Lower leg skin (tissue), 4 donors: ENCODE measurements at regions of chr12 and their contacts with region 1.

Region 1: GRCh38 chr12:78457938-78458337 is 406.6 kb upstream of the SYT1 start:
- DNase-seq: no peak
- H3K4me3 ChIP-seq: no peak overlapping the region
- CTCF ChIP-seq: no peak
- POLR2A ChIP-seq: no peak

Region 2: DNA sequence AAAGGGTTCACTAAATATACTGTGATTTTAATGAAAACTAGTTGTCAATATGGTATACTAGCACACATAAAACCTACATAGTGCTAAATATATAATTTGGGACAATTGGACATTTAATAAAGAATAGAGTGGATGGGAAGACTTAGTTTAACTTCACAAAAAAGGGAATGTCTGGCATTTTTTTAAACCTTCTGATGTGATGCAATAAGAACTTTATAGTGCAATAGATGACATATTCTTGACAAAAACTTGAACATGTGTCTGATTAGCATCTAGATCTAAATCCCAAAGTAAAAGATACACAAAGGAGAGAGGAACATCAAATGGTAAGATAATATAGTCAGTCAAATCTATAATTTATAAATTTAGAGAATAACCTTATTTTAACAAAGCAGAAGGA is 81.7 kb before region 1 on chr12:
- intact Hi-C with region 1: loop called (anchors 2 kb)
- DNase-seq: no peak
- H3K4me3 ChIP-seq: no peak overlapping the region
- CTCF ChIP-seq: no peak
- POLR2A ChIP-seq: no peak

Region 3: DNA sequence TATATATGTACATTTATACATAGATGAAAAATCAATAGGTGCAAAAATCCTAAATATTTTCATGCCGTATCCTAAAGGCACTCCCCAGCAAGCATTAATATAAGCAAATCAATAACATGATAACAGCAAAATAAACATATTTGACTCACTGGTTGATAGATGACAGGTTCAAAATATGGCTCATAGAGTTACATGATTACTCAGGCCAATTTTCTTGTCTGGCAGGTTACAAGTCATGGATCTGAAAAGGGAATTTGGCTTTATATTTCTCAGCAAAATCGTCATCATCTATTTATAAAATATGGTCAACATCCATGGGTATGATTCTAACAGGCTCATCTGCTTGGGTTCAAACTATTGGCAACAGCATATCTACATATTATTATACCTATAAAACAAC is 371.8 kb after region 1 on chr12:
- intact Hi-C with region 1: loop called (anchors 5 kb)
- DNase-seq: no peak
- H3K4me3 ChIP-seq: no peak overlapping the region
- CTCF ChIP-seq: no peak
- POLR2A ChIP-seq: no peak

Region 4: DNA sequence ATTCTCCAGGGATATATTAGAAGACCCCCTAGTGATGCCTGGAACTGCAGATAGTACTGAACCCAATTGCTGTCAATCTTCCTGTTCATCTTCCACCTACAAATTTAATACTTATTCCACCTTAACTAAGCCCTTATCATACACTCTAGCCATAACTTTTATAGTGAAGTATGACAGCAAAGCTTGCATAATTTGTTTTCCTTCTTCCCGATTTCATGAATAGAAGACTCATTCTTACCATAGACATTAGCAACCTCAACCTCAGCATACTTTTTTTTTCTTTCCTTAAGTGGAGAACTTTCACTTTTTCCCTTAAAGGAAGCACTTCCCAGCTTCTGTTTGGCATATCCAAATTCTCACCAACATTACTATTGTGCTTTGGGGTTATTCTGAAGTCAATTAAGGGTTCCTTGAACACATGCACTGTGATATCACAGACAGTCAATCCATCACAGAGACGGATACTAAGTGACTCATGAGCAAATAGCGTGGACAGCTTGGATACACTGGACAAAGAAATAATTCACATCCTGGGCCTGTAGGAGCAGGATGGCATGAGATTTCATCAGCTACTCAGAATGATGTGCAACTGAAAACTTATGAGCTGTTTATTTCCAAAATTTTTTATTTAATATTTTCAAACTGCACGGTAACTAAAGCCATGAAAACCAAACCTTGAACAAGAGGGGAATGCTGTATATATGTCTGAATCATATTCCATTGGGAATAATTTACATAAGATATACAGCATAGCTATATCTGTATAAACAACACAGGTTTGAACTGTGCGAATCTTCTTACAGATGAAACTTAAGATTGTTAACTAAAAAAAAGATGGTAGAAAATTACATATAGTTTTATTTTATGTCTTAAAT is 470.5 kb after region 1 on chr12:
- intact Hi-C with region 1: no loop called
- DNase-seq: no peak
- H3K4me3 ChIP-seq: no peak overlapping the region
- CTCF ChIP-seq: no peak
- POLR2A ChIP-seq: no peak